ENCODE measurements at regions of chr12 and their contacts with region 1.

Region 1: GRCh38 chr12:14460212-14460841 is 94.8 kb downstream of the ATF7IP start:
- DNase-seq: peak in 2 of 35 experiments; percentile 2 to 32
- ATAC-seq: peak in 1 of 4 experiments; percentile 70
- H3K4me3 ChIP-seq: no peak overlapping the region
- H3K4me3 Mint-ChIP-seq: no peak overlapping the region
- H3K27ac ChIP-seq: no peak overlapping the region
- H3K27ac Mint-ChIP-seq: peak overlapping the region; percentile 8 to 42
- H3K4me1 ChIP-seq: peaks cover 4 to 6% of the 10 kb centered on the region in 2 experiments
- H3K4me1 Mint-ChIP-seq: peaks cover 29 to 48% (median 42%) of the 10 kb centered on the region in 3 donors
- H3K27me3 ChIP-seq: no peaks in the 10 kb centered on the region
- H3K27me3 Mint-ChIP-seq: no peaks in the 10 kb centered on the region

Region 2: GRCh38 chr12:14167005-14167628 is 293.2 kb before region 1 on chr12:
- CTCF ChIA-PET with region 1: interaction called in 1 of 2 experiments, 12 read pairs
- POLR2A ChIA-PET with region 1: interaction called in 1 of 2 experiments, 3 read pairs
- DNase-seq: peak in 16 of 35 experiments; percentile 2 to 58 (median 16)
- ATAC-seq: no peak
- H3K4me3 ChIP-seq: no peak overlapping the region
- H3K4me3 Mint-ChIP-seq: no peak overlapping the region
- H3K27ac ChIP-seq: no peak overlapping the region
- H3K27ac Mint-ChIP-seq: no peak overlapping the region
- H3K4me1 ChIP-seq: no peaks in the 10 kb centered on the region
- H3K4me1 Mint-ChIP-seq: peaks cover 0 to 6% (median 2%) of the 10 kb centered on the region in 3 donors
- H3K27me3 ChIP-seq: no peaks in the 10 kb centered on the region
- H3K27me3 Mint-ChIP-seq: peaks cover 5 to 6% of the 10 kb centered on the region in 2 donors

Region 3: GRCh38 chr12:14275886-14276285 is 184.4 kb before region 1 on chr12:
- CTCF ChIA-PET with region 1: no interaction called
- POLR2A ChIA-PET with region 1: no interaction called
- DNase-seq: no peak
- ATAC-seq: peak in 1 of 4 experiments; percentile 39
- H3K4me3 ChIP-seq: no peak overlapping the region
- H3K4me3 Mint-ChIP-seq: no peak overlapping the region
- H3K27ac ChIP-seq: no peak overlapping the region
- H3K27ac Mint-ChIP-seq: no peak overlapping the region
- H3K4me1 ChIP-seq: no peaks in the 10 kb centered on the region
- H3K4me1 Mint-ChIP-seq: peaks cover 13 to 20% (median 20%) of the 10 kb centered on the region in 3 donors
- H3K27me3 ChIP-seq: no peaks in the 10 kb centered on the region
- H3K27me3 Mint-ChIP-seq: no peaks in the 10 kb centered on the region

Region 4: DNA sequence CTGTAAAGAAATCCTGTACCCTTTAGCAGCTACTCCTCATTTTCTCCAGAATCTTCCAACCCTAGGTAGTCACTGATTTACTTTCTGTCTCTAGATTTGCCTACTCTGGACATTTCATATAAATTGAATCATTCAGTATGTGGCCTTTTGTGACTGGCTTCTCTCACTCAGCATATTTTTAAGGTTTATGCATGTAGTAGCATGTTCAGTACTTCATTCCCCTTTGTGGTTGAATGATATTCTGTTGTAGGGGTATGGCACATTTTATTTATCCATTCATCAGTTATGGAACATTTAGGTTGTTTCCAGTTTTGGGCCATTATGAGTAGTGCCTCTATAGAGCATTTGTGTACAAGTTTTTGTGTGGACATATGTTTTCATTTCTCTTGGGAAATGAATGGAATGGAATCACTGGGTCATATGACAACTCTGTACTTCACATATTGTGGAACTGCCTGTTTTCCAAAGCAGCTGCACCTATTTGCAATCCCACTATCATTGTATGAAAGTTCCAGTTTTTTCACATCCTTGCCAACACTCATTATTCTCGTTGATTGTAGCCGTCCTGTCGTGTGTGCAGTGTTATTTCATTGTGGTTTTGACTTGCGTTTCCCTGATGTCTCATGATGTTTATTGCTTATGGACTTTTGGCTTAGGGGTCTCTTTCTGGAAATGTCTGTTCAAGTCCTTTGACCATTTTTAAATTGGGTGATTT is 37.7 kb before region 1 on chr12:
- CTCF ChIA-PET with region 1: no interaction called
- POLR2A ChIA-PET with region 1: no interaction called
- DNase-seq: no peak
- ATAC-seq: no peak
- H3K4me3 ChIP-seq: no peak overlapping the region
- H3K4me3 Mint-ChIP-seq: peak overlapping the region in 1 of 3 donors; percentile 24
- H3K27ac ChIP-seq: no peak overlapping the region
- H3K27ac Mint-ChIP-seq: peak overlapping the region in 1 of 2 donors; percentile 23
- H3K4me1 ChIP-seq: peaks cover 9 to 19% of the 10 kb centered on the region in 2 experiments
- H3K4me1 Mint-ChIP-seq: peaks cover 70 to 75% (median 73%) of the 10 kb centered on the region in 3 donors
- H3K27me3 ChIP-seq: no peaks in the 10 kb centered on the region
- H3K27me3 Mint-ChIP-seq: no peaks in the 10 kb centered on the region

Region 5: GRCh38 chr12:14481201-14481600 is 20.9 kb after region 1 on chr12:
- CTCF ChIA-PET with region 1: no interaction called
- POLR2A ChIA-PET with region 1: no interaction called
- DNase-seq: no peak
- ATAC-seq: no peak
- H3K4me3 ChIP-seq: no peak overlapping the region
- H3K4me3 Mint-ChIP-seq: no peak overlapping the region
- H3K27ac ChIP-seq: no peak overlapping the region
- H3K27ac Mint-ChIP-seq: no peak overlapping the region
- H3K4me1 ChIP-seq: no peaks in the 10 kb centered on the region
- H3K4me1 Mint-ChIP-seq: peaks cover 0 to 8% (median 8%) of the 10 kb centered on the region in 3 donors
- H3K27me3 ChIP-seq: no peaks in the 10 kb centered on the region
- H3K27me3 Mint-ChIP-seq: no peaks in the 10 kb centered on the region

Measured in T-cell (primary cell).